ENCODE measurements at regions of chr12 and their contacts with region 1.

Region 1: DNA sequence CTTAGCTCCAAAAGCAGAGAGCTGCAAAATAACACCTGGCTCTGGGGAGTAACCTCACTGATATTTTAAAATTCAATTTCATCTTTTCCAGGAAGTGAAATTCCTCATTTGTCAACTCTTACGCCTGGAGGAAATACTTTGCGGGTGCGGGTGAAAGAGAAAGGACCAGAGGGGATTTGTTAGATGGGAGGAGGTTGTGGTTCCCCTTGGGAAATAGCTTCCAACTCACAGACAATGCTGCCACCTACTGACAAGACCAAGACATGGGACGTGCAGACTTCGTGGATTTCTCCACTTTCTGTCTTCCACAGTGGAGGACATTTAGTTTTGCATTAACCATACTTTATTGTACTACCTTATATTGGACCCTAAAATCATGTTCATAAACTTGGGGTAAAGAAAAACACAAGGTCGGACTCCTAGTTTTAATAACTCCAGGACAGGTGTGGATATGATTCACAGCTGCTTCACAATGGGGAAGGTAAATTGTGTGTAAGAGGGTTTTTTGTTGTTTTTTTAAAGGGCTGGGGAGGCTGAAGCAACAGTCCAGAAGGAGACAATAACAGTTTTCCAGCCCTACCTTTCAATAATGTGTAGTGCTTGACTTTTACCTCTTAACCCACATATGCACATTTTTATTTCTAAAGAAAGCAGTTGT is 10.8 kb downstream of the FBXL14 start:
- DNase-seq: peak; percentile 74 to 80
- ATAC-seq: peak; percentile 84

Region 2: GRCh38 chr12:1130164-1130563 is 453.4 kb before region 1 on chr12:
- intact Hi-C with region 1: loop called in 1 of 2 experiments (anchors 5 kb)
- DNase-seq: peak; percentile 76 to 82
- ATAC-seq: peak; percentile 93

Region 3: DNA sequence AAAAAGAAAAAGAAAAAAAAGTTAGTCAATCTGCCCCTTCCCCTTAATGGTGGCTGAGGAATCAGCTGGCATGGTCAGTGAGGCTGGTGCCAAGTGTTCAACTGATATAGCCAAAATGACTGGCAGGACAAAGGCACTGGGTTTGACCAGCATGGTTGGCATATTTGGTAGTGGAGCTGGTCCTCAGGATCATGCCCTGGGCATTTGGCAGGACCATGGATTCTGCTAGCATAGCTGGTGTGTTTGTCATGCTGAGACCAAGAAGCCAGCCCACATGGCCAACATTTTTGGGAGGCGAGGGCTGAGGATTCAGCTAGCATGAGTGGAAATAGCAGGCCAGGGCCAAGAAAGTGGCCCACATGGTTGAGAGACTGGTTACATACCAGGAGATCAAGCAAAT is 125.6 kb before region 1 on chr12:
- intact Hi-C with region 1: no loop called
- DNase-seq: no peak
- ATAC-seq: no peak

Region 4: GRCh38 chr12:1518591-1519541 is 64.7 kb before region 1 on chr12:
- intact Hi-C with region 1: no loop called
- DNase-seq: no peak
- ATAC-seq: peak; percentile 77

Region 5: GRCh38 chr12:1650260-1650977 is 66.9 kb after region 1 on chr12:
- intact Hi-C with region 1: no loop called
- DNase-seq: no peak
- ATAC-seq: no peak